ENCODE measurements at regions of chr4 and their contacts with region 1.

Region 1: GRCh38 chr4:71713611-71714203 is 70.2 kb downstream of the GC start:
- DNase-seq: peak; percentile 36
- H3K4me3 ChIP-seq: no peak overlapping the region
- CTCF ChIP-seq: peak; percentile 50

Region 2: DNA sequence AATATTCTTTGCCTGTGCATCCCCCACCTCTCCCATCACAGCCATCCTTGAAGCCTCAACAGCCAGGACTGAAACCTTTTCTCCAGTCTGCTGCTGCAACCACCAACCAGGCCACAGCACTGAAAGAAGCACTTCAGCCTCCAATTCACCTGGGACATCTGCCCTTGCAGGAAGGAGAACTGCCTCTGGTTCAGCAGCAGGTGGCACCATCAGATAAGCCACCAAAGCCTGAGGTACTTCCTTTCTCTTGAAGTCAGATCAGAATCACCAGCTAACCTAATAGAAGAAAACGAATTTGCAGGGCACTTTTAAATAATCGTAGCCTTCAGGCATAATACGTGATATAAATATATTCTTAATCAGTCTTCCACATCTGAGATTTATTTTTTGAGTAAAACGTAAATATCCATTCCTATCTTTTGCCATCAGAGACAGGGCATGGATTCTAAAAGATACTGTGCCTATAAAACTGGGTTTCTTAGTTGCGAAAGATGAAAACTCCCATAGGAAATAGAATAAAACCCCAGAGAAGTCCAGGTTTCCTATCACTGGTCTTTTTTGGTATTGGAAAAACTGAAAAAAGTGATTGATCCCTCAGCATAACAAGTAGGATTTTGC is 1112.2 kb before region 1 on chr4:
- CTCF ChIA-PET with region 1: interaction called, 10 read pairs
- POLR2A ChIA-PET with region 1: no interaction called
- DNase-seq: peak; percentile 26
- H3K4me3 ChIP-seq: no peak overlapping the region
- CTCF ChIP-seq: peak; percentile 81

Region 3: DNA sequence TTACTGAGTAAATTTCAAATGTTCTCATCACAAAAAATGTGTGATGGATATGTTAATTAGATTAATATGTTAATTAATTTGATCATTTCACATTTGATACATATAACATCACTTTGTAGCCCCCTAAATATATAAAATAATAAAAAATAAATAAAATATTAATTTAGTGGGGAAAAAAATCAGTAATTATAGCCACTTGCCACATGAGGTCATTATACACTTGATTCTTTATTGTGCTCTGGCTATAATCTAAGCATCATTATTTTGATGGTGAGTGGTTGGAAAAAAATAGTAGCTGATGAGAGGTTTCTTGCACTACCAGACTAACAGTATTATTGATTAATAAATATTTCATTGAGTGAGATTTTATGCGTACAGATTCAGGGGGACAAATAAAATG is 662.9 kb before region 1 on chr4:
- CTCF ChIA-PET with region 1: interaction called, 12 read pairs
- POLR2A ChIA-PET with region 1: no interaction called
- DNase-seq: no peak
- H3K4me3 ChIP-seq: no peak overlapping the region
- CTCF ChIP-seq: no peak

Region 4: GRCh38 chr4:71130827-71131603 is 582.7 kb before region 1 on chr4:
- CTCF ChIA-PET with region 1: interaction called, 25 read pairs
- POLR2A ChIA-PET with region 1: no interaction called
- DNase-seq: peak; percentile 33
- H3K4me3 ChIP-seq: peak overlapping the region; percentile 40
- CTCF ChIP-seq: peak; percentile 12

Region 5: DNA sequence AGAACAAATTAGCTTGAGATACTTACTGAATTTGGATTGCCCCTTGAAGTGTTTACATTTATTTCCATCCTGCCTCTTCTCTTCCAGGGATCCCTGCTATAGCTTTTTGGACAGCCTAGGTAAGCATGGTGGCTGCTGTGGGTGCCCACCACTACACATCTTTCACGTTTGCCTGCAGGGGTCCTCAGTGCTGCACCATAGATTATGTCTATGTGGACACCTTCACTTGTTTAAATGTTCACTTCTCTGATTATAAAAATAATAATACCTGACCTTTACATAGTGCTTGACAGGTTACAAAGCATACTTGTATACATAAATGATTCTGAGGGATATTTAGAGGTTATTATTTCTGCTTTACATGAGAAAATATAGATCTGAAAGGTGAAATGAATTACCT is 442.8 kb before region 1 on chr4:
- CTCF ChIA-PET with region 1: interaction called, 44 read pairs
- POLR2A ChIA-PET with region 1: no interaction called
- DNase-seq: no peak
- H3K4me3 ChIP-seq: no peak overlapping the region
- CTCF ChIP-seq: peak; percentile 40

Region 6: DNA sequence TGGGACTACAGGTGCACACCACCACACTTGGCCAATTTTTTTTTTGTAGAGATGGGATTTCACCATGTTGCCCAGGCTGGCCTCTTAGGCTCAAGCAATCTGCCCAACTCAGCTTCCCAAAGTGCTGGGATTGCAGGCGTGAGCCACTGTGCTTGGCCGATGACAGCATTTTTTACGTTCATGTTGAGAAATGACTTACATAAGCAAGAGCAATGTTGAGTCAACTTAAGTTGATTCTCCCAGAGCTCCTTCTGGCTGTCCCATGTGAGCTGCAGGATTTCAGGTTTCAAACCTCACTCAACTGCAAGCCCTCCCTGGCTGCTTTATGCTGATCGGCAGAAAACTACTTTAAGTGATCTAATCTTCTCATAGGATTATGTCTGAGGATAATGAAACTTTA is 16.7 kb before region 1 on chr4:
- CTCF ChIA-PET with region 1: interaction called, 13 read pairs
- POLR2A ChIA-PET with region 1: no interaction called
- DNase-seq: no peak
- H3K4me3 ChIP-seq: no peak overlapping the region
- CTCF ChIP-seq: no peak